ENCODE measurements at regions of chr17 and their contacts with region 1.

Region 1: DNA sequence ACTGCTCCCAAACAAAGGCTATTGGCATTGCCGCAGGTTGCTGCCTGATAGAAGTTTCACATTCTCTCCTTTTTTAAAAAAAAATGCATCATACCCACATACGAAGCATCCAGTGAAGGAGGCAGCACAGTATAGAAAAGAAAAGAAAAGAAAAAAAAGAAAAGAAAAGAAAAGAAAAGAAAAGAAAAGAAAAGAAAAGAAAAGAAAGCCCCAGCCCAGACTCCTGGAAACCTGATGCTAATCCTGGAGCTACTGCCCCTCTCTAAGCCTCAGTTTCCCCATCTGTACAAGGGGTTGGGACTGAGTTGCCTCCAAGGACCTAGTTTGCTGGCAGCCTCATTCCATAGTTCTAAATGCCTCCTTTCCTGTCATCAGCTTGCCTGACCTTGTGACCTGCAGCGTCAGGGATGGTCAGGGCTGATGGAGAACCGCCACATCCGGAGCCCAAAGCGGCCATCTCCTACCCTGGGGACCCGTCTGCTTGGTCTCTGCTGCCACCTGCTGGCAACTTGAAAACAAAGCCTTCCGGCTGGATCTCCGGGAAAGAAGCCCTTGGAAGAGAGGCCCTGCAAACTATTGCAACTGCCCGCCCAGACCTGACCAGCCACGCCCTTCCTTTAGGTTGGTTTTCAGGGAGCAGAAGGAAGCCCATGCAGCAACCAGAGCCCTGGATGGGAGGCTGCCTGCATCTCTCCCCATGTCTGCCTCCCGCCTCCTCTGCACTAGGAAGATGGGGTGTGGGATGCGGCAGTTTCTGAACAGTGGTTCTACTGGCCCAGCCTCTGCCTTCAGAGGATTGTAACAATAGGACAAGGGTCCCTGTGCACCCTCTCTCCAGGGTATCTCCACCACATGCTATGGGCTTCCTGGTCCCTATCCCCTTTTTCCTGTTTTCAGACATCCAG is 13.0 kb downstream of the AIPL1 start:
- DNase-seq: peak; percentile 68 to 71
- H3K4me3 ChIP-seq: no peak overlapping the region
- H3K4me3 Mint-ChIP-seq: no peak overlapping the region
- H3K27ac Mint-ChIP-seq: no peak overlapping the region
- H3K4me1 ChIP-seq: no peaks in the 10 kb centered on the region
- H3K4me1 Mint-ChIP-seq: no peaks in the 10 kb centered on the region
- H3K27me3 ChIP-seq: no peaks in the 10 kb centered on the region
- H3K27me3 Mint-ChIP-seq: no peaks in the 10 kb centered on the region
- CTCF ChIP-seq: peak; percentile 59 to 64

Region 2: GRCh38 chr17:6279659-6280058 is 142.3 kb before region 1 on chr17:
- CTCF ChIA-PET with region 1: no interaction called
- POLR2A ChIA-PET with region 1: no interaction called
- intact Hi-C with region 1: loop called (anchors 5 kb)
- DNase-seq: peak; percentile 46 to 49
- H3K4me3 ChIP-seq: no peak overlapping the region
- H3K4me3 Mint-ChIP-seq: no peak overlapping the region
- H3K27ac Mint-ChIP-seq: no peak overlapping the region
- H3K4me1 ChIP-seq: no peaks in the 10 kb centered on the region
- H3K4me1 Mint-ChIP-seq: no peaks in the 10 kb centered on the region
- H3K27me3 ChIP-seq: no peaks in the 10 kb centered on the region
- H3K27me3 Mint-ChIP-seq: peaks cover 9% of the 10 kb centered on the region
- CTCF ChIP-seq: peak; percentile 15 to 46

Region 3: GRCh38 chr17:6454957-6455705 is 33.2 kb after region 1 on chr17:
- CTCF ChIA-PET with region 1: no interaction called
- POLR2A ChIA-PET with region 1: no interaction called
- intact Hi-C with region 1: no loop called
- DNase-seq: no peak
- H3K4me3 ChIP-seq: no peak overlapping the region
- H3K4me3 Mint-ChIP-seq: no peak overlapping the region
- H3K27ac Mint-ChIP-seq: no peak overlapping the region
- H3K4me1 ChIP-seq: no peaks in the 10 kb centered on the region
- H3K4me1 Mint-ChIP-seq: no peaks in the 10 kb centered on the region
- H3K27me3 ChIP-seq: no peaks in the 10 kb centered on the region
- H3K27me3 Mint-ChIP-seq: no peaks in the 10 kb centered on the region
- CTCF ChIP-seq: no peak

Region 4: GRCh38 chr17:6473128-6473767 is 51.3 kb after region 1 on chr17:
- CTCF ChIA-PET with region 1: no interaction called
- POLR2A ChIA-PET with region 1: no interaction called
- intact Hi-C with region 1: no loop called
- DNase-seq: peak; percentile 68 to 70
- H3K4me3 ChIP-seq: no peak overlapping the region
- H3K4me3 Mint-ChIP-seq: no peak overlapping the region
- H3K27ac Mint-ChIP-seq: peak overlapping the region; percentile 17
- H3K4me1 ChIP-seq: no peaks in the 10 kb centered on the region
- H3K4me1 Mint-ChIP-seq: peaks cover 6% of the 10 kb centered on the region
- H3K27me3 ChIP-seq: no peaks in the 10 kb centered on the region
- H3K27me3 Mint-ChIP-seq: peaks cover 3% of the 10 kb centered on the region
- CTCF ChIP-seq: peak; percentile 74 to 78

Region 5: GRCh38 chr17:6546069-6546718 is 124.2 kb after region 1 on chr17:
- CTCF ChIA-PET with region 1: no interaction called
- POLR2A ChIA-PET with region 1: no interaction called
- intact Hi-C with region 1: no loop called
- DNase-seq: no peak
- H3K4me3 ChIP-seq: no peak overlapping the region
- H3K4me3 Mint-ChIP-seq: no peak overlapping the region
- H3K27ac Mint-ChIP-seq: no peak overlapping the region
- H3K4me1 ChIP-seq: no peaks in the 10 kb centered on the region
- H3K4me1 Mint-ChIP-seq: no peaks in the 10 kb centered on the region
- H3K27me3 ChIP-seq: no peaks in the 10 kb centered on the region
- H3K27me3 Mint-ChIP-seq: no peaks in the 10 kb centered on the region
- CTCF ChIP-seq: no peak

Measured in Caco-2 (cell line).